ENCODE measurements at regions of chr22 and their contacts with region 1.

Region 1: DNA sequence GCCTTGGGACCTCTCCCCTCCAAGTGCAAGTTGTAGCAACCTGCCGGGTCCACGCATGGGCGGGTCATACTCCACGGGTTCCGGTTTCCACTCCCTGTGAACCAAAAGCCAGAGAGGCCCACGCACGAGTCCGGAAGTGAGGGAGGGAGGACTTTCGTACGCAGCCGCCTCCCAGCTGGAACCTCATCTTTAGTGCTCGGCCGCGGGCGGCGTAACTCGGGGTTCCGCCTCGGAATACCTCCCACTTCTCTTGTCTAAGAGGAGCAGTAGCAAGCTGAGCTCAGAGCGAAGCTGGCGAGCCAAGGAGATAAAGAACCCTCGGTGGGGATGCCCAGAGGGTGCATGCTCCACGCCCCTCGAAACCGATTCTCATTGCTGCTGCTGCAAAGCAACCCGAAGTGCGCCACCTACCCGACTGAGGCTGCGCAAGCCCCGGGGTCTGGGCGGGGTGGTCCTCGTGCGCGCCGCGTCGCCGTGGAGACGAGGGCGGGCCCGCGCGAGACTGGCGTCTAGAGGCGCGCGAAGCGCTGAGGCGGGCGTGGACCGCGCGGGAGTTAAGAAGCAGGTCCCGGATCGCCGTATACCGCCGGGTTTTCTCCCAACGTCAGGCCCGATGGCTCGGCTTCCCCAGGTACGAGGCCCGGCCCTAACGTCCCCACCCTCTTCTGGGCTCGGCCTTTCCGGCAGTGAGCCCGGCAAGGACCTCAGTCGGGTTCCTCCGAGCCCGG is at the start of gene SFI1:
- DNase-seq: peak; percentile 91 to 98 (median 96)
- ATAC-seq: peak; percentile 93
- H3K4me3 ChIP-seq: peak within 1 kb of the TSS; percentile 83
- H3K4me3 Mint-ChIP-seq: peak within 1 kb of the TSS; percentile 85 to 99 (median 96)
- H3K27ac ChIP-seq: peak within 1 kb of the TSS; percentile 92
- H3K27ac Mint-ChIP-seq: peak within 1 kb of the TSS; percentile 92 to 99 (median 98)
- H3K4me1 ChIP-seq: peaks cover 18 to 20% of the 10 kb centered on the region in 2 donors
- H3K4me1 Mint-ChIP-seq: peaks cover 7 to 50% (median 43%) of the 10 kb centered on the region in 7 donors
- H3K27me3 ChIP-seq: no peaks in the 10 kb centered on the region
- H3K27me3 Mint-ChIP-seq: no peaks in the 10 kb centered on the region
- total RNA-seq, gene SFI1: 196 to 359 (median 343) TPM

Region 2: GRCh38 chr22:29883045-29883774 is 1613.0 kb before region 1 on chr22 and contains the start of gene MTMR3:
- CTCF ChIA-PET with region 1: no interaction called
- POLR2A ChIA-PET with region 1: no interaction called
- intact Hi-C with region 1: loop called in 1 of 2 experiments (anchors 10 kb)
- DNase-seq: peak; percentile 71 to 99 (median 82)
- ATAC-seq: peak; percentile 91
- H3K4me3 ChIP-seq: peak within 1 kb of the TSS; percentile 69
- H3K4me3 Mint-ChIP-seq: peak within 1 kb of the TSS in 7 of 10 donors; percentile 72 to 95 (median 92)
- H3K27ac ChIP-seq: peak within 1 kb of the TSS; percentile 93
- H3K27ac Mint-ChIP-seq: peak within 1 kb of the TSS; percentile 70 to 93 (median 84)
- H3K4me1 ChIP-seq: peaks cover 17 to 21% of the 10 kb centered on the region in 2 donors
- H3K4me1 Mint-ChIP-seq: peaks cover 0 to 12% (median 1%) of the 10 kb centered on the region in 7 donors
- H3K27me3 ChIP-seq: no peaks in the 10 kb centered on the region
- H3K27me3 Mint-ChIP-seq: peaks cover 0 to 3% (median 0%) of the 10 kb centered on the region in 5 donors
- total RNA-seq, gene MTMR3: 33.2 to 88.7 (median 64.6) TPM

Region 3: DNA sequence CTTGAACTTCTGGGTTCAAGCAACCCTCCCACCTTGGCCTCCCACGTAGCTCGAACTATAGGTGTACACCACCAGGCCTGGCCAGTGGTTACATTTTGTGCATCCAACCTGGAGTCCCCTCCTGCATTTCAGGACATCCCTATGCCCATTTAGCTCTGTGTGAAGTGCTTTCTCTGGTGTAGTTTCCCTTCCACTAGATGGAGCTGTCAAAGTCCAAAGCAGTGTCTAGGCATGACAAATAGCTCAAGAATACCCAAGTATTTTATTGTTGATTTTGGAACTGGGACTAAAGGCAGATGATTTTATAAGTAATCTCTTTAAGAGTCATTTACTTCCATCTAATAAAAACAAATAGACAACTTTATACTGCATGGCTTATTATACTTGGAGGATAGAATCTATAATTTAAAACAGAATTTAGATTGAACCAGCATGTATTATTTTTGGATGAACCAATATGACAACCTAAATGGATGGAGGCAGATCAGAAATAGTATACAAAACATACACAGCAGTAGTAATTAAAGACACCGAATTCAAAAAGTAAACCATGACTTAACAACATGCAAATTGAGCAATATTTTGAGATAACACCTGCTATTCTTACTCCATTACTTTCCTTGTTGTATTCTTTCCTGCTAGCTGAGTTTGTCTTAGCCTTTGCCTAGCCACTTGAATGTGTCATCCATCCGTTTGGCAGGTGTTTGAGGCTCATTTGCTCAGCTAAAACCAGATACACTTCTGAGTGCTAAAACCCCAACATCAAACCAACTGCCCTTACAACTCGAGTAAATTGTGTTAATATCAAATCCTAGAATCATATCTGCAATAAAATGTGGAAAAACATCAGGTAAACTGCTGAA is 44.2 kb before region 1 on chr22:
- CTCF ChIA-PET with region 1: no interaction called
- POLR2A ChIA-PET with region 1: no interaction called
- intact Hi-C with region 1: loop called in 1 of 2 experiments (anchors 5 kb)
- DNase-seq: peak in 5 of 9 donors; percentile 12 to 31 (median 21)
- ATAC-seq: peak; percentile 63
- H3K4me3 ChIP-seq: no peak overlapping the region
- H3K4me3 Mint-ChIP-seq: no peak overlapping the region
- H3K27ac ChIP-seq: no peak overlapping the region
- H3K27ac Mint-ChIP-seq: peak overlapping the region in 7 of 9 donors; percentile 4 to 59 (median 28)
- H3K4me1 ChIP-seq: no peaks in the 10 kb centered on the region
- H3K4me1 Mint-ChIP-seq: peaks cover 0 to 4% (median 0%) of the 10 kb centered on the region in 7 donors
- H3K27me3 ChIP-seq: no peaks in the 10 kb centered on the region
- H3K27me3 Mint-ChIP-seq: no peaks in the 10 kb centered on the region

Region 4: DNA sequence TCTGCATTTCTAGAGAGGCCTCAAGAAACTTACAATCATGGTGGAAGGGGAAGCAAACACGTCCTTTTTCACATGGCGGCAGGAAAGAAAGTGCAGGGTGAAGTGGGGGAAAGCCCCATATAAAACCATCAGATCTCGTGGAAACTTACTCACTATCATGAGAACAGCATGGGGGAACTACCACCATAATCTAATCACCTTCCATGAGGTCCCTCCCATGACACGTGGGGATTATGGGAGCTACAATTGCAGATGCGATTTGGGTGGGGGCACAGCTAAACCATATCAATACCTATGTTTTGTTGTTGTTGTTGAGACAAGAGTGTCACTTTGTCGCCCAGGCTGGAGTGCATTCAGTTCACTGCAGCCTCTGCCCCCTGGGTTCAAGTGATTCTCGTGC is 30.1 kb after region 1 on chr22:
- CTCF ChIA-PET with region 1: no interaction called
- POLR2A ChIA-PET with region 1: no interaction called
- intact Hi-C with region 1: loop called in 1 of 2 experiments (anchors 2 kb)
- DNase-seq: peak in 2 of 9 donors; percentile 17 to 46
- ATAC-seq: peak; percentile 75
- H3K4me3 ChIP-seq: no peak overlapping the region
- H3K4me3 Mint-ChIP-seq: peak overlapping the region in 1 of 10 donors; percentile 27
- H3K27ac ChIP-seq: no peak overlapping the region
- H3K27ac Mint-ChIP-seq: peak overlapping the region in 7 of 9 donors; percentile 4 to 77 (median 55)
- H3K4me1 ChIP-seq: peaks cover 0 to 12% of the 10 kb centered on the region in 2 donors
- H3K4me1 Mint-ChIP-seq: peaks cover 21 to 52% (median 41%) of the 10 kb centered on the region in 7 donors
- H3K27me3 ChIP-seq: no peaks in the 10 kb centered on the region
- H3K27me3 Mint-ChIP-seq: no peaks in the 10 kb centered on the region

Region 5: GRCh38 chr22:31692186-31692886 is 196.2 kb after region 1 on chr22:
- CTCF ChIA-PET with region 1: no interaction called
- POLR2A ChIA-PET with region 1: no interaction called
- intact Hi-C with region 1: no loop called
- DNase-seq: no peak
- ATAC-seq: peak; percentile 56
- H3K4me3 ChIP-seq: no peak overlapping the region
- H3K4me3 Mint-ChIP-seq: peak overlapping the region in 1 of 10 donors; percentile 44
- H3K27ac ChIP-seq: no peak overlapping the region
- H3K27ac Mint-ChIP-seq: peak overlapping the region in 6 of 9 donors; percentile 5 to 86 (median 74)
- H3K4me1 ChIP-seq: peaks cover 0 to 4% of the 10 kb centered on the region in 2 donors
- H3K4me1 Mint-ChIP-seq: peaks cover 0 to 31% (median 0%) of the 10 kb centered on the region in 7 donors
- H3K27me3 ChIP-seq: no peaks in the 10 kb centered on the region
- H3K27me3 Mint-ChIP-seq: no peaks in the 10 kb centered on the region

Region 6: DNA sequence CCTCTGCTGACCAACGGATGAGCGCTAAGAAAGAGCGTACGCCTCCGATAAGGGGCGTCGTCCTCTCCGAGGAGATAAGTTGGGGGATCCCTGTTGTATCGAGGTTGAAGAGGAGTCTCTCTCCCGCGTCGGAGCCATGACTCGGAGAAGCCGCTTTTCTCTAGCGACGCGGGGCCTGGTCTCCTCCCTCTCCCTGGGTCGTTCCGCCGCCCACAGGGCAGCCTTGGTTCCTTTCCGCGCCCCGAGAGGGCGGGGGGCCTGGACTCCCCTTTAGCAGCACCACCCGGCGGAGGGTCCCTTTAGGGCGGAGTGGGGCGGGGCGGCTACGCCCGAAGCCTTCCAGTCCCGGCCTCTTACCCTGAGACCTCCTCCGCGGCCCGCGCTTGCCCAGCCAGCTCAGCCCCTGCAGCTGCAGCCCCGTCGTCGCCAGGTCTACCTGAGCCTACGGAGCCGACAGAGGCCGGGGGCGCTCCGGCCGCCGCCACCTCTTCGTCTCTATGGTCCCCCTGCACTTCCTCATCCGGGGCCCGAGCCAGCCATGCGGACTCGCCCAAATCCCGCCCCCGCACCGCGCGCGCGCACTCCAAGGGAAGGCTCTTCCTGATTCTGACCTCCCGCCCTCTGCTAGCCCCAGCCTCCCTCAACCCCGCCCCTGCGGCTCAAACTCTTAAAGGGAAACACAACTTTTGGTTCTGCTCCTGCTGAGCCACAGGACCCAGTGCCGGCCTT is 253.6 kb after region 1 on chr22 and contains the start of gene PRR14L:
- CTCF ChIA-PET with region 1: no interaction called
- POLR2A ChIA-PET with region 1: interaction called, 4 read pairs
- intact Hi-C with region 1: loop called (anchors 1 to 5 kb)
- DNase-seq: peak; percentile 94 to 100 (median 98)
- ATAC-seq: peak; percentile 86
- H3K4me3 ChIP-seq: peak within 1 kb of the TSS; percentile 92
- H3K4me3 Mint-ChIP-seq: peak within 1 kb of the TSS; percentile 87 to 97 (median 94)
- H3K27ac ChIP-seq: peak within 1 kb of the TSS; percentile 83
- H3K27ac Mint-ChIP-seq: peak within 1 kb of the TSS; percentile 82 to 98 (median 96)
- H3K4me1 ChIP-seq: peaks cover 31 to 37% of the 10 kb centered on the region in 2 donors
- H3K4me1 Mint-ChIP-seq: peaks cover 36 to 65% (median 59%) of the 10 kb centered on the region in 7 donors
- H3K27me3 ChIP-seq: no peaks in the 10 kb centered on the region
- H3K27me3 Mint-ChIP-seq: peaks cover 0 to 2% (median 0%) of the 10 kb centered on the region in 5 donors
- total RNA-seq, gene PRR14L: 43.1 to 82.6 (median 66.9) TPM